ENCODE measurements at regions of chr4 and their contacts with region 1.

Region 1: GRCh38 chr4:173420324-173420752 is 21.4 kb upstream of the SCRG1 start:
- DNase-seq: no peak
- H3K4me3 ChIP-seq: no peak overlapping the region
- CTCF ChIP-seq: no peak
- POLR2A ChIP-seq: no peak

Region 2: GRCh38 chr4:172881645-172882044 is 538.7 kb before region 1 on chr4:
- intact Hi-C with region 1: no loop called
- DNase-seq: no peak
- H3K4me3 ChIP-seq: no peak overlapping the region
- CTCF ChIP-seq: no peak
- POLR2A ChIP-seq: no peak

Region 3: GRCh38 chr4:173013232-173013930 is 407.0 kb before region 1 on chr4:
- intact Hi-C with region 1: loop called (anchors 10 kb)
- DNase-seq: peak in 1 of 2 donors; percentile 19
- H3K4me3 ChIP-seq: no peak overlapping the region
- CTCF ChIP-seq: no peak
- POLR2A ChIP-seq: no peak

Region 4: DNA sequence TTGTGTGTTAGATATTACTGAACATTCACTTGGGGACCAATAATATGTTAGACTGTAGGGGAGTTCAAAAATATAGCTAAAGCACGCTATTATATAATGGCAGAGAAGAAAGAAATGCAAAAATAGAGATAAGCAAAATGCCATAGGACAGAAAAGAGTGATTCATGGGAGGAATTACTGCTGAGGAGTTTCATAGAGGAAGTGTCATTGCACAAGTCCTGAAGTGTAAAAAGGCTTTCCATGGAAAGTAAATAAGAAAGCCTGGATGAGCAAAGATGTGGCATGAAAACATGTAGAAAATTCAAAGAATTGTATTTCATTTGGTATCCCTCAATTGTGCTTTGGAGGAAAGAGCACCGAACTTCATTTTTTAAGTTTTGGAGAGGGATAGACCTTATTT is 100.6 kb before region 1 on chr4:
- intact Hi-C with region 1: loop called (anchors 5 kb)
- DNase-seq: no peak
- H3K4me3 ChIP-seq: no peak overlapping the region
- CTCF ChIP-seq: no peak
- POLR2A ChIP-seq: no peak

Region 5: DNA sequence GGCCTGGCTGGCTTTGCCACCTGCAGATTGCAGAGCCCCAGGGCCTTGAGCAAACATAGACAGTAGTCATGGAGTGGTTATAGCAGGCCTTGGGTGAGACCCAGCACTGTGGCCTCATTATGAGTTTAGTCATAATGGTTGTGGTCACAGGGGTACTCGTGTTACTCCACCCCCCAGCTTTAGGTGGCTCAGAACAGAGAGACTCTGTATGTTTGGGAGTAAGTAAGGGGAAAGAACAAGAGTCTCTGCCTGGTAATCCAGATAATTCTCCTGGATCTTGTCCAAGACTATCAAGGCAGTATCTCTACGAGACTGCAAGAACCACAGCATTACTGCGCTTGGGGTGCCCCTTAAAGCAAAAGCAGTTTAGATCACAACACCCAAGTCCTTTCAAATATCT is 40.8 kb after region 1 on chr4:
- intact Hi-C with region 1: no loop called
- DNase-seq: no peak
- H3K4me3 ChIP-seq: no peak overlapping the region
- CTCF ChIP-seq: no peak
- POLR2A ChIP-seq: no peak

Region 6: GRCh38 chr4:173494013-173494970 is 74.0 kb after region 1 on chr4:
- intact Hi-C with region 1: loop called (anchors 5 kb)
- DNase-seq: peak in 1 of 2 donors; percentile 89
- H3K4me3 ChIP-seq: no peak overlapping the region
- CTCF ChIP-seq: no peak
- POLR2A ChIP-seq: no peak

Measured in lower leg skin (tissue), 4 donors.